ENCODE measurements at regions of chr1 and their contacts with region 1.

Region 1: GRCh38 chr1:49346767-49347349 is 570.2 kb upstream of the BEND5 start:
- DNase-seq: no peak
- H3K4me3 ChIP-seq: no peak overlapping the region
- H3K27ac ChIP-seq: no peak overlapping the region
- H3K4me1 ChIP-seq: no peaks in the 10 kb centered on the region
- H3K27me3 ChIP-seq: no peaks in the 10 kb centered on the region
- CTCF ChIP-seq: no peak
- EP300 ChIP-seq: no peak
- POLR2A ChIP-seq: no peak

Region 2: GRCh38 chr1:48581270-48581669 is 765.6 kb before region 1 on chr1:
- in situ Hi-C with region 1: no loop called
- intact Hi-C with region 1: loop called (anchors 5 kb)
- DNase-seq: no peak
- H3K4me3 ChIP-seq: no peak overlapping the region
- H3K27ac ChIP-seq: no peak overlapping the region
- H3K4me1 ChIP-seq: no peaks in the 10 kb centered on the region
- H3K27me3 ChIP-seq: no peaks in the 10 kb centered on the region
- CTCF ChIP-seq: no peak
- EP300 ChIP-seq: no peak
- POLR2A ChIP-seq: no peak

Region 3: DNA sequence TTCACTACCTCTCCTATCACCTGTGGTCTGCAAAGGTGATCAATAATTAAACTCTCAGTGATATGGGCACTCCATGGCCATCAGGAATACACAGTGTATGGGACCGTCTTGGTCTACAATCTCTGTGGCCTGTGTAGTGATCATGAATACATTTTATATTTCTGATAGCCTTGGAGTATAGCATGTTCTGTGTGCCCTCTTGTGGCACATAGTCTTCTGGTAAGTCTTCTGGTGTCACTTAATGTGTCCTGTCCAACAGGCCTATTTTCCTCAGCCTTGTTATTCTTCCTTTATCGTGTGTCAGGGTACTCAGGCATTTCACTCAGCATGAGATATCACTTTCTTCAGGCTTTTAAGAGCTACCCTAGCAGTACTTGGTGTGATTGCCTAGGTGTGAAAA is 283.3 kb after region 1 on chr1:
- in situ Hi-C with region 1: no loop called
- intact Hi-C with region 1: no loop called
- DNase-seq: no peak
- H3K4me3 ChIP-seq: no peak overlapping the region
- H3K27ac ChIP-seq: no peak overlapping the region
- H3K4me1 ChIP-seq: no peaks in the 10 kb centered on the region
- H3K27me3 ChIP-seq: no peaks in the 10 kb centered on the region
- CTCF ChIP-seq: no peak
- EP300 ChIP-seq: no peak
- POLR2A ChIP-seq: no peak

Measured in transverse colon (tissue), 4 donors.